ENCODE measurements at regions of chr3 and their contacts with region 1.

Region 1: DNA sequence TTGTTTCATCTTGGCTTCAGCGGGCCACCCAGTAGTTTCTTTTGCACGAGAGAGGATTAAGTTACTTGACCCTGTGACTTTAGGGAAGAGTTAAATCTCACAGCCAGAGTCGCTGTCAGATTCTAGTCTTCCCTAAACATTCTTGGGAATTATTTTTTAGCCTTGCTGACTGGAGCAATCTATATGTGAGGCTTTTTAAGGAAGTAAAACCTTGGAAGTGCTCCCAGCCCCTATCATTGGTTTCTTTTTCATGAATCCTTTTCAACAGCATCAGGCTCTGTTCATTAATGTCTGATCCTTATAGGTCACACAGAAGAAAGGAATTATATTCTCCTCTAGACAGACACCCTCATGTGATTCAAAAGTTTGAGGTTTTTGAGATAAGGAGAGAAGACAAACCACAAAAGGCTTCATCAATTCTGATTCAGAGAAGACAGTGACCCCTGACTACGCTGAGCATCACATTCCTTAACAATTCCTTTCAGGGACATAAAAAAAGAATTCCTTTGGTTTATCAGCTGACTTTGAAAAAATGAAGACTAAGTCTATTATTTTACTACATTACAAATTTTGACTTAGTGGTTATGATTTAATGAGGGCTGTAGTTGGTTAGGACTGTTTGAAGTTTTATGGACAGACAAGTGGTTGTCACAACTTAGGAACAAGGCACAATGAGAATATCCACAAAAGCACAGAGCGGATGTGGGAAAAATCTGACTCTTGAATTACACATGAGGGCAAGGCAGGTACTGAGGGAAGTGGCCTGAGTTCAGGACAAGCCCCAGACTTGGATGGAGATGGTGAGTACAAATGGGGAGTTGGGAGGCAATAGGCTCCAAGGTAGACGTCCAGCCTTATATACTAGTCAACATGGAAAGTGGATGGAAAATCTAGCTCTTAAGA is 171.1 kb upstream of the STT3B start:
- DNase-seq: no peak
- ATAC-seq: no peak
- H3K4me3 ChIP-seq: no peak overlapping the region
- H3K27ac ChIP-seq: no peak overlapping the region
- H3K4me1 ChIP-seq: no peaks in the 10 kb centered on the region
- H3K27me3 ChIP-seq: no peaks in the 10 kb centered on the region

Region 2: GRCh38 chr3:31275038-31275562 is 86.5 kb before region 1 on chr3:
- intact Hi-C with region 1: no loop called
- DNase-seq: no peak
- ATAC-seq: peak; percentile 52
- H3K4me3 ChIP-seq: no peak overlapping the region
- H3K27ac ChIP-seq: peak overlapping the region; percentile 53 to 71
- H3K4me1 ChIP-seq: peaks cover 2 to 6% of the 10 kb centered on the region in 2 donors
- H3K27me3 ChIP-seq: no peaks in the 10 kb centered on the region

Region 3: DNA sequence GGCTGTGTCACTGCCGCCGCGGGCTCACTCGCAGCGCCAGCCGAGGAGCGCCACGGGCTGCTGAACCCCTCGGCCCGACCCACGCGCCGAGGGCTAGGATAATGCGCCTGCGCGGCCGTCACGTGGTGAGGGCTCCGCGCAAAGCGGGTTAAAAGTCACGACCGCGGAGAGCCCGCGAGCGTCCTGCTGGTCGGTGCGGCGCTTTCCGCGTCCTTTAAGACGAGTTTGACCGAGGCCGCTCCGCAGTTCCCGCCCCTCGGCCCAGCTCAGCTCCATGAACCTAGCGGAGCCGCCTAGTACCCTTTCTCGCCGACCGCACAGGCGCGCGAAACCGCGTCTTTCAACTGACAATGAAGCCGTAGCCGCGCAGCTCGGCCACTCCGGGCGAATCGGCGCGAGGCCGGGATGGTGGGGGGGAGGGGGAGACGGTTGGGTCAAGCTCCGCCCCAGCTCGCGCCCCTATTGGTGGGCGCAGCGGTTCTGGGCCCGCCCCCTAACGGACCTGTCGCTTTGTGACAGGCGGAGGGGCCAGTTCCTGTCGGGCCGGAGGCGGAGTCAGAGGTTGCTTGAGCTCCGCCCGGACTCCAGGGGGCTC is 170.5 kb after region 1 on chr3:
- intact Hi-C with region 1: loop called in 1 of 2 experiments (anchors 10 kb)
- DNase-seq: peak; percentile 99 to 100
- ATAC-seq: peak; percentile 98
- H3K4me3 ChIP-seq: peak overlapping the region; percentile 31 to 89
- H3K27ac ChIP-seq: peak overlapping the region in 1 of 2 donors; percentile 57
- H3K4me1 ChIP-seq: peaks cover 0 to 3% of the 10 kb centered on the region in 2 donors
- H3K27me3 ChIP-seq: no peaks in the 10 kb centered on the region

Measured in aorta (tissue), 5 donors.